ENCODE measurements at regions of chr16 and their contacts with region 1.

Region 1: DNA sequence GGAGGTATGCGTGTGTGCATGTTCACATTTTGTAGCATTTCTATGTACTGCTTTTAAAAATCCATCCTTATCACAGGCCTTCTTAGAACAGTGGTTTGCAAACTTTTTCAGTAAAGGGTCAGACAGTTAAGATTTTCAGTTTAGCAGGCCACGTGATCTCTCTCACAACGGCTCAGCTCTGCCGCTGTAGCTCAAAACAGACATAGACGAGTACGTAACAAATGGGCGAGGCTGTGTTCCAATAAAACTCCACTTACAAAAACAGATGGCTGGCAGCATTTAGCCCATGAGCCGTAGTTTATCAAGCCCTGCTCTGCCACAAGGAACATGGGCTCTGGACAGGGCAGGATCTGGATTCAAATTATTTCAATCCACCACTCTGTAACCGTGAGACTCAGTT is 141.8 kb downstream of the XYLT1 start:
- DNase-seq: no peak
- ATAC-seq: peak; percentile 65 to 78

Region 2: GRCh38 chr16:17177242-17177958 is 151.5 kb before region 1 on chr16:
- intact Hi-C with region 1: no loop called
- DNase-seq: no peak
- ATAC-seq: no peak

Region 3: DNA sequence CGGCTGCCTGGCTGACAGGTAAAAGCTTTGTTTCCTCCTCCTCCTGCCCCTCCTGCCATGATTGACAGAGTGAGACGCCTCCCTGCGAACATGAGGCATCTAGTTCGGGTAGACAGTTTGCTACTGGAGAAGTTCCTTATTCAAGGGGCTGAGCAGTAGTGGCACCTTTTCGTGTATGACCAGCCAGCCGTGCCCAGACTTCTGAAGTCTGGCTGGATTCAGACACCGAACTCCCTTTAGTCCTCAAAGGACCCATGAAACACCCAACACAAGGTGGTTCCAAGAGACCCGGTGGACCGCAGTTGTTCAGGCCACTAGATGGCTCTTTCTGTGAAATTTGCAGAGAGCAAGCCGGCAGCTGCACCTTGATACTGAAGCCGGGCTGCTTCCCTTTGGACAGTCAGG is 51.0 kb before region 1 on chr16:
- intact Hi-C with region 1: loop called in 1 of 2 experiments (anchors 10 kb)
- DNase-seq: peak; percentile 35
- ATAC-seq: peak; percentile 61 to 67

Region 4: DNA sequence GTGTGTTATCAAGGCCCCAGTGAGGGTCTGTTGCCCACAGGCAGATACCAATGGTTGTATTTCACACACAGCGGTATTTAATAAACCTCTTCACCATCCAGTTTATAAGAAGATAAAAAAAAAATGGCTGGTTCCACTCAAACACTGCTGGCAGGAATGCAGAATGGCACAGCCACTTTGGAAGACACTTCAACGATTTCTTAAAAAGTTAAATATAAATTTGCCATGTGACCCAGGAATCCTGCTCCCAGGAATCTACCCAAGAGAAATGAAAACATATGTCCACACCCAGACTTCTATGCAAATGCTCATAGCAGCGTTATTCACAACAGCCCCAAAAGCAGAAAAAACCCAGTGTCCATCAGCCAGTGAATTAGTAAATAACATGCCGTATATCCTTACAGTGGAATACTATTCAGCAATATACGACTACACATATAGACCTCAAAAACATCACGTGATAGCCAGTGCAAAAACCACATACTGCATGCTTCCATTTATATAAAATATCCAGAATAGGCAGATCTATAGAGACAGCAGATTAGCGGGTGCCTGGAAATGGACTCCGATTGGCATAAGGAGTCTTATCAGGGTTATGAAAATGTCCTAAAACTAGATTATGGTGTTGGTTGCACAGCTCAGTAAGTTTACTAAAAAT is 103.2 kb after region 1 on chr16:
- intact Hi-C with region 1: no loop called
- DNase-seq: no peak
- ATAC-seq: no peak

Region 5: DNA sequence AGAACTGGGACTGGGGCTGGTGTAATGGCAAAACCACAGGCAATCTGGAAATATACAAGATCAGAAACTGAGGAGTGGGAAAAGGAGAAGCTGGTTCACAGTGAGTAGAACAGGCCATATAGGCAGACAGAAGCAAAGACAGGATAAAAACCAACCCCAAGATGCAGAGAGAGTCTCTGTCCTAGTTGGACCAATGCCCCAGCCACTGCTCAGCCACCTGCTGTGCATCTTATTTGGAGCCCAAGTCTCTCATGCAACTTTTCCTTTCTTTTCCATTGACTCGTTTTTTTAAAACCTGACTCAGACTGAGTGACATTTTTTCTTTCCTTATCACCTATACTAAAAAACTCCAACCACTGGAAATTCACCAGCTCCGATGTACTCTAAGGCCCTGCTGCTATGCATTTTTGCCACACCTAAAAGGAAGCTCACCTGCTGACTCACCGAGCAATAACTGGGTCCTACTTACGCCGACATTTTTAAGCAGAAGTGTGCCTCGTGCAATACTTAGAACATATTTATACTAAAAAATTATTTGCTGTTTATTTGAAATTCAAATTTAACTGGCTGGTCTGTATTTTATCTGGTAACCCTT is 242.7 kb after region 1 on chr16:
- intact Hi-C with region 1: no loop called
- DNase-seq: no peak
- ATAC-seq: no peak